ENCODE measurements at regions of chr11 and their contacts with region 1.

Region 1: DNA sequence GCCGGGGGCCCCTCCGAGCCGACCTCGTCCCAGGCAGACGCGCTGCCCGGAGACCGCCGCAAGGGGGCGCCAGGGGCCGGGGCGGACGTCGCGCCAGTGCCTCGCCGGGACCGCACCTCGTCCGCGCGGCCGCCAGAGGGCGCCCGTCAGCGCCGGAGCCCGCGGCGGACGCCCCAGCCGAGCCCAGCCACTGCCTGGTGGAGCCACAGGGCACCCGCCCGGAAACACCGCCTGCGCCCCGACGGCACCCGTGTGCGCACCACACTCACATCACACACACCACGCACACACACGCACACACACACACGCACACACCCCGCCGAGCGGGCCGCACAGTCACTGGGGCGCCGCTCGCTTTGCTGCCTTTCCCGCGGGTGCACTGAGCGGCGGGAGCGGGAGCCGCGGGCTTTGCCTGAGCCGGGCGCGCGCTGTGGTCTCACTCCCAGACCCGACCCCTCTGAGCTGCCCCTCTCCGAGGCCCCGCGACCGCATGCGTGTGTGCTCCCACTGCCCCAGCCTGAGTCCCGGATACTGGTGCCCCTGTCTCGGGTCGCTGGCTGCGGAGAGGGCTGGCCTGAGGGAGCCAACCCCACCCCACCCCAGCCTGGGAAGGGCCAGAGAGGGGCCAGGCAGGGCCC is 449.3 kb downstream of the OPCML start:
- DNase-seq: peak in 9 of 10 donors; percentile 31 to 85 (median 60)
- H3K4me3 ChIP-seq: peak overlapping the region; percentile 30 to 69 (median 54)
- H3K27ac ChIP-seq: peak overlapping the region in 27 of 59 donors; percentile 4 to 74 (median 51)
- H3K27me3 ChIP-seq: peaks cover 0 to 45% (median 6%) of the 10 kb centered on the region in 45 donors
- CTCF ChIP-seq: peak in 53 of 56 donors; percentile 28 to 100 (median 80)

Region 2: GRCh38 chr11:133024301-133024700 is 58.7 kb before region 1 on chr11:
- intact Hi-C with region 1: no loop called
- DNase-seq: no peak
- H3K4me3 ChIP-seq: no peak overlapping the region
- H3K27ac ChIP-seq: no peak overlapping the region
- H3K27me3 ChIP-seq: peaks cover 0 to 4% (median 0%) of the 10 kb centered on the region in 45 donors
- CTCF ChIP-seq: no peak

Region 3: DNA sequence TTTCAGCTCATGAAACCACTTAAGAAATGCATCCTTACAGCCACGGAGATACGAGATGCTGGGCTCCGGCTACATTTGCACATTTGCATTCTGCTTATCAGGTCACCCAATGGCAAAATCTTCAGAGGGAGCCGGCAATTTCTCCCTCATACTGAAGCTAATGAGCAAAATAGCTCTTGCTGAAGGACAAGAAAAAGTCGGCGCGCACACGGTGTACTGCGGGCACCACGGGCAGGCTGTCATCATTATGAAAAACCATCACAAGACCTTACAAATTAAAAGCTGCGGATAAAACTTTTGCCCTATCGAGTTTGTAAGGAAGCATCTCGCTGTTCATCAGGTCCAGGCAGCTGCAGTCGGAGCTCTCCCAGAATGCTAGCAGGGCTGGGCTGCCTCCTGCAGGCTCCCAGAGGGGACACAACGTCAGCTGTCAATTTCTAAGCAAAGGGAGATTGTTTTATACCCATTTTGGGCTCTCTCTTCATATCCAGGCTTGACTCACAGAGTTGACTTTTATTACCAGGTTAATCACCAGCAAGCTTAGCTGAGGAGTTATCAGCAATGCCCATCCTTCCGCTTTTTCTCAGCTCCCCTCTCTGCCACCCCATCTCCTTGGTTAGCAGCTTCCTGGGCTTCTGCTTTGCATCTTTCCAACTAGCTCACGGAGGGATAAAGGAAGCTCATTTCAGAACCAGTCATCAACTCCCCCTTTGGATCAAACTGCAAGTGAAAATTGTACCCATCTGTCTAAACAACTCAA is 74.2 kb after region 1 on chr11:
- intact Hi-C with region 1: loop called (anchors 2 to 5 kb)
- DNase-seq: peak in 5 of 10 donors; percentile 50 to 67 (median 60)
- H3K4me3 ChIP-seq: peak overlapping the region in 40 of 59 donors; percentile 1 to 50 (median 22)
- H3K27ac ChIP-seq: peak overlapping the region in 4 of 59 donors; percentile 29 to 62 (median 46)
- H3K27me3 ChIP-seq: peaks cover 0 to 49% (median 5%) of the 10 kb centered on the region in 45 donors
- CTCF ChIP-seq: peak in 47 of 56 donors; percentile 14 to 57 (median 39)

Region 4: GRCh38 chr11:133163463-133164419 is 80.8 kb after region 1 on chr11:
- intact Hi-C with region 1: loop called in 1 of 2 experiments (anchors 5 kb)
- DNase-seq: peak in 1 of 10 donors; percentile 37
- H3K4me3 ChIP-seq: no peak overlapping the region
- H3K27ac ChIP-seq: peak overlapping the region in 8 of 59 donors; percentile 0 to 70 (median 22)
- H3K27me3 ChIP-seq: peaks cover 0 to 35% (median 0%) of the 10 kb centered on the region in 45 donors
- CTCF ChIP-seq: peak; percentile 51 to 87 (median 76)

Region 5: DNA sequence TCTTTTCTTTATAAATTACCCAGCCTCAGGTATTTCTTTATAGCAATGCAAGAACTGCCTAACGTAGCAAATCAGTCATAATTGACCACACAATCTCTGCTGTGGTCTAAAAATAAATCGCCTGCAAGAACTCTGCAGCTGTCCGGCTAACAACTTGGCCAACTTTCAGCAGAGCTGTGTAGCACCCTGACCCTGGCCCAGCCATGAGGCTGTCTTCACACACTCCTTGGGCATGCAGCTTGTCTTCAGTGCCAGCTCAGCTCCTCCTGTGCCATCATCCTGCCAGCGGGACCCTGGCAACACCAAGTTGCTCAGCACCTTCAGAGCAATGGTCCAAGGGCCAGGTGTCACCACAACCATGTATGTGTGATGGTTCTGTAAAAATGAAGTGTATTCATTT is 93.8 kb after region 1 on chr11:
- intact Hi-C with region 1: no loop called
- DNase-seq: no peak
- H3K4me3 ChIP-seq: no peak overlapping the region
- H3K27ac ChIP-seq: no peak overlapping the region
- H3K27me3 ChIP-seq: peaks cover 0 to 19% (median 0%) of the 10 kb centered on the region in 45 donors
- CTCF ChIP-seq: no peak

Region 6: DNA sequence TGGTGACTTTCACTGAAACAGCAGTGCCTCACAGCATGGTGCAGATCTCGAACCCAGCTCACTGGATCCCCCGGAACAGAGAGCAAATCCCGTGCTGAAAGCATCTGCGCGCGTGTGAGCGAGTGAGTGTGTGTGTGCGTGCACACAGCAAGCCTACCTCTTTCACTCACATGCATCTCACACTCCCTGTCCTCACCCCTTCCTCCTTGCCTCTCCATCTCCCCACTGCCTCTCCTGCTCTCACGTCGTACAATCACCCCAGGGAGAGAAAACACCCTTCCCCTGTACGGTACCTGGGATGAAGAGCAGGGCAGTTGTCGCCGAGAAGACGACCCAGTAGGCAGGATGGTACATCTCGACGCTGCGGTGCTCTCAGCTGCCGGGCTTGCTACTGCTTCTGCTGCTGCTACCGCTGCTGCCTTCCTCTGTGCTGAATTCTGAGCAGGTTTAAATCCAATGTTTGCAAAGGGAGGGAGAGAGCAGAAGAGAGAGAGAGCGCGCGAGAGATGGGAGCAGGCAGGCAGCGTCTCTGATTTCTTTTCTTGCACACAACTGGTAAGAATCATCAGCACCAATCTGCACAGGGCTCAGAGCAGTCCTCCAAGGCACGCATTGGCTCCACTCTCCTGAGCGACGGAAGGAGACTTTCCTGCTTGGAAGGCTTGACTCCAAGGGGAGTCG is 449.1 kb after region 1 on chr11 and contains the start of gene OPCML:
- intact Hi-C with region 1: loop called in 1 of 2 experiments (anchors 2 kb)
- DNase-seq: peak in 8 of 10 donors; percentile 21 to 75 (median 59)
- H3K4me3 ChIP-seq: peak within 1 kb of the TSS; percentile 3 to 72 (median 52)
- H3K27ac ChIP-seq: peak within 1 kb of the TSS in 57 of 59 donors; percentile 36 to 88 (median 81)
- H3K27me3 ChIP-seq: peaks cover 0 to 60% (median 21%) of the 10 kb centered on the region in 45 donors
- CTCF ChIP-seq: no peak
- total RNA-seq, gene OPCML: 75.9 to 296 (median 202) TPM

Region 7: GRCh38 chr11:133815636-133816035 is 732.7 kb after region 1 on chr11:
- intact Hi-C with region 1: loop called in 1 of 2 experiments (anchors 5 kb)
- DNase-seq: peak in 3 of 10 donors; percentile 54 to 78 (median 76)
- H3K4me3 ChIP-seq: no peak overlapping the region
- H3K27ac ChIP-seq: peak overlapping the region in 27 of 59 donors; percentile 1 to 78 (median 56)
- H3K27me3 ChIP-seq: peaks cover 0 to 15% (median 0%) of the 10 kb centered on the region in 45 donors
- CTCF ChIP-seq: no peak

Region 8: GRCh38 chr11:133834682-133835592 is 752.0 kb after region 1 on chr11:
- intact Hi-C with region 1: loop called (anchors 2 kb)
- DNase-seq: peak in 4 of 10 donors; percentile 58 to 64 (median 60)
- H3K4me3 ChIP-seq: no peak overlapping the region
- H3K27ac ChIP-seq: peak overlapping the region in 3 of 59 donors; percentile 4 to 27 (median 20)
- H3K27me3 ChIP-seq: peaks cover 0 to 8% (median 0%) of the 10 kb centered on the region in 45 donors
- CTCF ChIP-seq: peak in 54 of 56 donors; percentile 36 to 88 (median 70)

Measured in dorsolateral prefrontal cortex (tissue), 120 donors.